Dorsolateral prefrontal cortex (tissue), 120 donors: ENCODE measurements at regions of chr2 and their contacts with region 1.

Region 1: DNA sequence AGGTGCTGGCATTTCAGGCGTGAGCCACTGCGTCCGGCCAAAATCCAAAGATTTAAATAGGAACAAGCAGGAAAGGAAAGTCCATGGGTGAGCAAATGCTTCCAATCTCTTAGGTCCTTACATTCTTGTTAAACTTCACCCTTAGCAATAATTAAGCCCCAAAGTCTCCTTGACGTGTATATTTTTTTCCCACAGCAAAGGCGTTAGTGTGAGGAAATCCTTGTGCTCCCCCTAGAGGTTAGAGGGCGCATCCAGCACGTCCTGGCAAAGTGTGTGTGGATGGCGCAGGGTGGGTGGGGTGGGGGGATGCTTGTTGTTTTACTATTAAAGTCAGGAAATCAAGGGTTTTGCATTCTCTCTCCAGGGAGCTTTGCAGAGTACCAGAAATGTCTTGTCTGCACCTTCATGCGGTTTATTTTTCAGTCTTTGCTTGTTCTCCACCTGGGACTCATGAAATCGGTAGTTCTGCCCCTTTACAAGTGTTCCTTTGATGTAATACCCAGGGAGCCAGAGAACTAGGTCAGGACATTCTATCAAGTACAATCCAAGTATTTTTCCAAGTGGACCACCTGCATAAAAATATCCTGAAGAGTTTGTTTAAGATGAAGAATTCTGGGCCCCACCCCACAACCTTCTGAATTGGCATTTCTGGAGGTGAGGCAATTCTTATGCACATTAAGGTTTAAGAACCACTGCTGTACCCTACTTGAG is 22.2 kb upstream of the ITSN2 start:
- DNase-seq: peak in 7 of 10 donors; percentile 30 to 54 (median 53)
- H3K4me3 ChIP-seq: peak overlapping the region in 11 of 59 donors; percentile 11 to 38 (median 20)
- H3K27ac ChIP-seq: peak overlapping the region in 8 of 59 donors; percentile 19 to 65 (median 42)
- H3K27me3 ChIP-seq: no peaks in the 10 kb centered on the region
- CTCF ChIP-seq: peak; percentile 30 to 86 (median 75)

Region 2: DNA sequence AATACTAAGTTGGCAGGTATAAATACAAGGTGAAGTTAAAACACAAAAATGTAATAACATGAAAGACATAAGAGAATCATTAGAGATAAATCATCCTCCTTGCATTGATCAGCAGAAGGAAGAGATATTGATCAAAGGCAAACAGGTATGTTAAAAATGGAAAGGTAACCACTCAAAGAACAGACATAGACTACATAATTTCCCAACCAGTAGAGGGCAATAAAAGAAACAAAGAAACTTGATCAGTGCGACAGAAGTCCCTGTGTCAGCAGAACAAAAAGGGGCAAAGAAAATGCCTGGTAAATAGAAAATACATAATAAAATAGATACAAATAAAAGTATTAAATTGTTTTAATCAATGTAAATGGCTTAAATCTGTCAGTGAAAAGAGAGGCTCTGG is 154.0 kb before region 1 on chr2:
- intact Hi-C with region 1: loop called (anchors 2 to 5 kb)
- DNase-seq: no peak
- H3K4me3 ChIP-seq: no peak overlapping the region
- H3K27ac ChIP-seq: peak overlapping the region in 36 of 59 donors; percentile 7 to 96 (median 64)
- H3K27me3 ChIP-seq: no peaks in the 10 kb centered on the region
- CTCF ChIP-seq: peak in 55 of 56 donors; percentile 17 to 82 (median 59)